CD4-positive, alpha-beta memory T cell (primary cell): ENCODE measurements at regions of chr1 and their contacts with region 1.

Region 1: GRCh38 chr1:101238681-101239094 is 1.9 kb downstream of the S1PR1 start:
- DNase-seq: peak; percentile 80 to 87 (median 82)
- H3K4me3 ChIP-seq: peak overlapping the region; percentile 94 to 97
- H3K4me3 Mint-ChIP-seq: peak overlapping the region; percentile 96 to 100 (median 98)
- H3K27ac ChIP-seq: peak overlapping the region; percentile 90
- H3K27ac Mint-ChIP-seq: peak overlapping the region; percentile 97 to 100 (median 98)
- H3K4me1 ChIP-seq: peaks cover 66% of the 10 kb centered on the region
- H3K4me1 Mint-ChIP-seq: peaks cover 37 to 92% (median 50%) of the 10 kb centered on the region in 4 donors
- H3K27me3 ChIP-seq: no peaks in the 10 kb centered on the region
- H3K27me3 Mint-ChIP-seq: no peaks in the 10 kb centered on the region

Region 2: GRCh38 chr1:100941098-100941527 is 297.6 kb before region 1 on chr1:
- CTCF ChIA-PET with region 1: interaction called, 3 read pairs
- POLR2A ChIA-PET with region 1: interaction called, 12 read pairs
- intact Hi-C with region 1: no loop called
- DNase-seq: no peak
- H3K4me3 ChIP-seq: no peak overlapping the region
- H3K4me3 Mint-ChIP-seq: peak overlapping the region in 5 of 8 donors; percentile 16 to 60 (median 44)
- H3K27ac ChIP-seq: no peak overlapping the region
- H3K27ac Mint-ChIP-seq: peak overlapping the region in 4 of 7 donors; percentile 15 to 88 (median 67)
- H3K4me1 ChIP-seq: peaks cover 26% of the 10 kb centered on the region
- H3K4me1 Mint-ChIP-seq: peaks cover 39 to 67% (median 51%) of the 10 kb centered on the region in 4 donors
- H3K27me3 ChIP-seq: no peaks in the 10 kb centered on the region
- H3K27me3 Mint-ChIP-seq: no peaks in the 10 kb centered on the region

Region 3: DNA sequence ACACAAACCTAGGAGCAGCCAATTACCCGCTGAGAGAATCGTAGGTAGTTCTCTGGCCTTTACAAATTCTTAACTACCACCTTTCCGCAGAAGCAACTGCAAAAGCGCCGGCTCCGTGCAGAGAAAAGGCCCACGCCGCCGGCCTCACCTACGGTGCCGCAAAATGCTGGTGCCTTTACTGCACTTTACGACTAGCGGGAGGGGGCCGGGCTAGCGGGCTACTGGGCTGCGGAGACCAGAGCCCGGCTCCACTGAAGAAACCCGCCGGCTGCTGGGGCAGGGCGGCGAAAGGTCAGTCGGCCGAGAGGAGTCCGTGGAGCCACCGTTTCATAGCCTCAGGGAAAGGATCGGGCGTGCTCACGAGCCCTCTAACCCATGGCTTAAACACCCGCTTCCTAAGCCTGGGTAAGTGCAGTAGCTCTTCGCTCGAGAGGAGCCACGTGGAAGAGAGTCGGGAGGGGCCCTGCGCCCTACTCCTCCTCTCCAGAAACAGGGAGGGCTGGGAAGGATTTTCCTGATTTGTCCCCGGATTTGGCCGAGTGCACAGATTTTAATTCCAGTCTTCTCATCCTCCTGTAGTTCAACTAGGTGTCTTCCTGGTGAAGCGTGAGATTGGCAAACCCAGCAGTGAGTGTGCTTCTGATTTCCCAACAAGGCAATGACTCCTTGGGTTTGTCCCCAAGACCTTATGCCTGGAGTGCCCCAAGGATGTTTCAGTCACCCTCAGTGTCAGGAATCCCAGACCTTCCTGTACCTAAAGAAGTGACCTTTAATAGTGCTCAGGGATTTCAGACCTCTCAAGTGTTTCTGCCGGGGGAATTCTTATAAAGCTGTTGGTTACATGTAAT is 212.8 kb before region 1 on chr1 and contains the start of gene DPH5:
- CTCF ChIA-PET with region 1: interaction called, 8 read pairs
- POLR2A ChIA-PET with region 1: interaction called, 77 read pairs
- intact Hi-C with region 1: loop called (anchors 1 kb)
- DNase-seq: peak; percentile 86 to 91 (median 87)
- H3K4me3 ChIP-seq: peak within 1 kb of the TSS; percentile 78 to 88
- H3K4me3 Mint-ChIP-seq: peak within 1 kb of the TSS; percentile 85 to 99 (median 96)
- H3K27ac ChIP-seq: peak within 1 kb of the TSS; percentile 76
- H3K27ac Mint-ChIP-seq: peak within 1 kb of the TSS; percentile 96 to 99 (median 98)
- H3K4me1 ChIP-seq: peaks cover 62% of the 10 kb centered on the region
- H3K4me1 Mint-ChIP-seq: peaks cover 46 to 81% (median 61%) of the 10 kb centered on the region in 4 donors
- H3K27me3 ChIP-seq: no peaks in the 10 kb centered on the region
- H3K27me3 Mint-ChIP-seq: no peaks in the 10 kb centered on the region
- total RNA-seq, gene DPH5: 49.3 to 58.3 TPM

Region 4: GRCh38 chr1:101128211-101128727 is 110.4 kb before region 1 on chr1:
- CTCF ChIA-PET with region 1: interaction called, 10 read pairs
- POLR2A ChIA-PET with region 1: interaction called, 33 read pairs
- intact Hi-C with region 1: no loop called
- DNase-seq: peak in 4 of 5 donors; percentile 17 to 42 (median 26)
- H3K4me3 ChIP-seq: no peak overlapping the region
- H3K4me3 Mint-ChIP-seq: peak overlapping the region; percentile 56 to 85 (median 72)
- H3K27ac ChIP-seq: peak overlapping the region; percentile 50
- H3K27ac Mint-ChIP-seq: peak overlapping the region; percentile 68 to 96 (median 89)
- H3K4me1 ChIP-seq: peaks cover 52% of the 10 kb centered on the region
- H3K4me1 Mint-ChIP-seq: peaks cover 45 to 73% (median 58%) of the 10 kb centered on the region in 4 donors
- H3K27me3 ChIP-seq: no peaks in the 10 kb centered on the region
- H3K27me3 Mint-ChIP-seq: no peaks in the 10 kb centered on the region

Region 5: DNA sequence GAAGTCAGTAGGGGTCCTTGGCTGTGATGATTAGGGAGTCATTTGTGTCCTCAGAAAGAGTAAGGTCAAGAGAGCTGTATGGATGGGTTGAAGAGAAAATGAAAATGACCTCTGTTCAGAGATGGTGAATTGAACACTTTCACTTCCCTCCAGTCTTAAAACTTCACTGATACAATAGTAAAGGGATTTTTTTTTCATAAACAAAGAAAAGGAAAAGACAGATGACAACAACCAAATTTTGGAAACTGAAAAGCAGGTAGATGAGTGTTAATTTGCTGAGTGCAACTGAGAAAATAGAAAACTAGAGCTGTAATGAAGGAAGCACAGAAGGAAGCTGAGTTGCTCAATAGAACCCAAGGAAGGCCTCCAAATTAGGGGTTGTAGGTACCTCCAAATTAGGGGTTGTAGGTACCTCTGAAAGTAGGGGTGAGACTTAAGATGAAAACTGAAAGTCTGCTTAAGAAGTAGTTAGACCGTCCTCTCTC is 16.7 kb before region 1 on chr1:
- CTCF ChIA-PET with region 1: interaction called, 10 read pairs
- POLR2A ChIA-PET with region 1: interaction called, 16 read pairs
- intact Hi-C with region 1: no loop called
- DNase-seq: no peak
- H3K4me3 ChIP-seq: no peak overlapping the region
- H3K4me3 Mint-ChIP-seq: peak overlapping the region in 7 of 8 donors; percentile 65 to 89 (median 77)
- H3K27ac ChIP-seq: no peak overlapping the region
- H3K27ac Mint-ChIP-seq: peak overlapping the region in 5 of 7 donors; percentile 43 to 84 (median 72)
- H3K4me1 ChIP-seq: no peaks in the 10 kb centered on the region
- H3K4me1 Mint-ChIP-seq: peaks cover 11 to 32% (median 19%) of the 10 kb centered on the region in 4 donors
- H3K27me3 ChIP-seq: no peaks in the 10 kb centered on the region
- H3K27me3 Mint-ChIP-seq: no peaks in the 10 kb centered on the region

Region 6: GRCh38 chr1:101282314-101283038 is 43.8 kb after region 1 on chr1:
- CTCF ChIA-PET with region 1: interaction called, 442 read pairs
- POLR2A ChIA-PET with region 1: interaction called, 955 read pairs
- intact Hi-C with region 1: no loop called
- DNase-seq: no peak
- H3K4me3 ChIP-seq: no peak overlapping the region
- H3K4me3 Mint-ChIP-seq: peak overlapping the region in 5 of 8 donors; percentile 8 to 80 (median 51)
- H3K27ac ChIP-seq: peak overlapping the region; percentile 66
- H3K27ac Mint-ChIP-seq: peak overlapping the region; percentile 89 to 98 (median 95)
- H3K4me1 ChIP-seq: peaks cover 99% of the 10 kb centered on the region
- H3K4me1 Mint-ChIP-seq: peaks cover 84 to 95% (median 90%) of the 10 kb centered on the region in 4 donors
- H3K27me3 ChIP-seq: no peaks in the 10 kb centered on the region
- H3K27me3 Mint-ChIP-seq: no peaks in the 10 kb centered on the region

Region 7: GRCh38 chr1:101379950-101380349 is 141.3 kb after region 1 on chr1:
- CTCF ChIA-PET with region 1: no interaction called
- POLR2A ChIA-PET with region 1: no interaction called
- intact Hi-C with region 1: no loop called
- DNase-seq: no peak
- H3K4me3 ChIP-seq: no peak overlapping the region
- H3K4me3 Mint-ChIP-seq: peak overlapping the region in 1 of 8 donors; percentile 49
- H3K27ac ChIP-seq: no peak overlapping the region
- H3K27ac Mint-ChIP-seq: peak overlapping the region in 1 of 7 donors; percentile 4
- H3K4me1 ChIP-seq: no peaks in the 10 kb centered on the region
- H3K4me1 Mint-ChIP-seq: peaks cover 4 to 11% (median 6%) of the 10 kb centered on the region in 4 donors
- H3K27me3 ChIP-seq: no peaks in the 10 kb centered on the region
- H3K27me3 Mint-ChIP-seq: peaks cover 0 to 2% of the 10 kb centered on the region in 2 donors

Region 8: GRCh38 chr1:102186536-102186935 is 947.8 kb after region 1 on chr1:
- CTCF ChIA-PET with region 1: no interaction called
- POLR2A ChIA-PET with region 1: no interaction called
- intact Hi-C with region 1: no loop called
- DNase-seq: no peak
- H3K4me3 ChIP-seq: no peak overlapping the region
- H3K4me3 Mint-ChIP-seq: no peak overlapping the region
- H3K27ac ChIP-seq: no peak overlapping the region
- H3K27ac Mint-ChIP-seq: no peak overlapping the region
- H3K4me1 ChIP-seq: no peaks in the 10 kb centered on the region
- H3K4me1 Mint-ChIP-seq: no peaks in the 10 kb centered on the region
- H3K27me3 ChIP-seq: no peaks in the 10 kb centered on the region
- H3K27me3 Mint-ChIP-seq: no peaks in the 10 kb centered on the region